GM18951 (cell line): ENCODE measurements at regions of chr7 and their contacts with region 1.

Region 1: GRCh38 chr7:140517546-140518369 is 38.5 kb upstream of the MKRN1 start:
- POLR2A ChIP-seq: no peak

Region 2: DNA sequence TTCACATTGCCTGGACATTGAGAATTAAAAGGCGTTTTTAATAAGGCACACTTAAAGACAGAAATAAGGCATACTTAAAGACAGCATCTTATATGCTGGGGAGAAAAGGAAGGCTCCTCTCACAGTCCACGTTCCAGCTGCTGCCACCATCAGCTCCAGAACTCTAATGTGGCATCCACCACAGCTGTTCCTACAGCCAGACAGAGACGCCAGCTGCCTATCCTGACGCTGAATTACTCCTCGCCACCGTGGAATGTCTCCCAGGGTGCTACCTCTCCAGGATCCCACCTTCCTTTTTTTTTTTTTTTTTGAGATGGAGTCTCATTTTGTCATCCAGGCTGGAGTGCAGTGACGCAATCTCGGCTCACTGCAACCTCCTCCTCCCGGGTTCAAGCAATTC is 150.2 kb before region 1 on chr7:
- in situ Hi-C with region 1: no loop called
- POLR2A ChIP-seq: no peak

Region 3: DNA sequence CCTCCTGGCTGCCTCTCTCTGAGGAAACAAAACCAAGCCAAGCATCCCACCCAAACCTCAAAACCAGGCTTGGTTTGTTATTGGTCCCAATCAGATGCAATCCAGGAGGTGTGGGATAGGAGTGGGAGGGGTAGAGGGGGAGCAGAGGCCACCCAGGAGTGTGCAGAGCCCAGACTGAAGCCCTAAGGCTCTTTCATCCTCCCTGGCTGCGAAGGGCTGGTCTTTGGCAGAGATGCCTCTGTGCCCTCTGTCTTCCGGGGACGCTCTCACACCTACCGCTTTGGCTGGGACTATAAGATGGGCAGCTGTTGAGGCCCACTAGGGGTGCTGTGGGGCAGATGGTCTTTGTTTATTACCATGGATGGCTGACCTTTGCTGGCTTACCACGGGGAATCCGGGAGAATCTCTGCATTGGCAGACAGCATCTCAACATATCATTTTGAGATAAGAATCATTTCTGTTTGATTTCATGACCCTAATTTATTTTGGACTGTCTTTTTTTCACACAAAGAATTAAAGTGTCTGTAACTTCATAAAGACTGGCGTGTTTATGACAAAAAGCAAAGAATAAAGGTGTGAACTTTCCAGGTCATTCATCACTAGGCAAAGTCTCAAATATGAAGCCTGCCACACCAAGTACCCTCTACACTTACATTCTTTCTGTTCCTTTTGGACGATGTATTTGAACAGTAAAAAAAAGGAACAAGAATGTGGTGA is 129.3 kb after region 1 on chr7:
- in situ Hi-C with region 1: loop called (anchors 5 kb)
- POLR2A ChIP-seq: no peak

Region 4: DNA sequence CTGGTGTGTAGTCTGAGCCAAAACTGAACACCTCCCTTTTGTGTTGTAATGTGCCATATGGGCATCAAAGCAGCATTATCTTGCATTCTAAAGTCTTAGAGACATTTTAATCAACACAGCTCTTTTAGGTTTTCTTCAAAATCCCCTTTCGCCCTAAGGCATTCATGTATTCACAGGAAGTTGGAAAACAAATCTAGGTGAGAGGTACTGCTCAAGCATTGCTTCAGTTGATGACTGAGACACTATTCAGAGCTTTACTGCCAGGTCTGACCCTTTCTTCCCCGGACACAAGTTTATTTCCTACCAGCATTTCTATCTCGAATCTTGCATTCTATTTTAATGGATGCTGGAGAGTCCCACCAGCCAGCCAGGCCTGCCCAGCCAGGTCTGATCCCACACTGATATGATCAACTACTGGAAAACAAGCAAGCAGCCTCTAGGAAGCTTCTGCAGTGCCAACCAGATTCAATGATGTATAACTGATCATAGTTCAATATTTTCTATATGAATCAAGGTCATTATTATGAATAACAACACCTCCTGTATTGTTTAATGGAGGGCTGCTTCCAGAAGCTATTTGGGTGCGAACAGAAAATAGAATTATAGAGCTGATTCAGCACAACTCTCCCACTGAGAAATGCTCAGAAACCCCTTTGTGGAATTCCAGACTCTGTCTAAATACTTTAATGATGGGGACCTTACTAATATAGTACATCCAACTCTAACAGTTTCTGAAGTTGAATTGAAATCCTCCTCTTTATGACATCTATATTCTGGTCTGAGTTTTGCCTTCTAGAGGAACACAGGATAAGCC is 410.9 kb after region 1 on chr7:
- in situ Hi-C with region 1: no loop called
- POLR2A ChIP-seq: no peak

Region 5: DNA sequence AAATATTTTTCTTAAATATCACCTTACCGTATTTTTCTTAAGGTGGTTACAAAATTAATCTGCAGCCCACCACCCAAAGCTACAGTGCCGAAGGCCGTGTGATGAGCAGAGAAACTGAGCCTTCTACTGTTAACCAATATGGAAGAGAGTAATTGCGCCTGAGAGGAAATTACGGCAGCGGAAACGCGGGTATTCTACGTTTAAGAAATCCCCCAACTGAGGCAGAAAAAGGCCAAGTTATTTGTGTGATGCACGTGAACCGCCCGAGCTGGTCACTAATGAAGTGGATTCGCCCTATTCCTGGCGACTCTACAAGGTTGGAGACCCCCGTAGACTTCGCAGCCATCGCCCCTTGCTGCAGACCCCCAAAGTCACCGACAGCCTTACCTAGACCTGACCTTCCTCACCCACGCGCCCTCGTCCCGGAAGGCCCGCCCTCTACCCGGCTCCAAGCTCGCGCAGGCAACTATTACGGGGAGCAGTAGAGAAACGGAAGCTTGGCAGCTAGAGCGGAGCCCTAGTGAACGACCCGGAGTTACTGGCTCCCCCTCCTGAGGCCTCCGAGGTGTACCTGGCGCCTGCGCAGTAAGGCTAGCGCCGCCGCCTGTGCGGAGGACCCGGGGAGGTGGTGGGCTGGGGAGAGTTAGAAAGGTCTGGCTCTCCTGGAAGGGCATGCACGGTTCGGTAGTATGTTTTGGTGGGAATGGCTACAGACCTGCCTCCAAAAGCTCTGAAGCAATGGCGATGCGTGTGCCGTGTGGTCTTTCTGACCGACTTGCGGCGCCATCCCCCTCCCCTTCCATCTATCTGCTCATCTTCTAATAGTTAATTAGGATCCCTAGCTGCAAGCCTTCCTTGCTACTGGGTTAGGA is 497.0 kb after region 1 on chr7 and contains the start of gene MRPS33:
- in situ Hi-C with region 1: loop called (anchors 25 kb)
- POLR2A ChIP-seq: peak; percentile 94